ENCODE measurements at regions of chr9 and their contacts with region 1.

Region 1: GRCh38 chr9:73116031-73116430 is 35.6 kb upstream of the ANXA1 start:
- DNase-seq: no peak
- H3K4me3 Mint-ChIP-seq: no peak overlapping the region
- H3K27ac Mint-ChIP-seq: no peak overlapping the region
- H3K4me1 Mint-ChIP-seq: peaks cover 32% of the 10 kb centered on the region
- H3K27me3 Mint-ChIP-seq: no peaks in the 10 kb centered on the region

Region 2: GRCh38 chr9:73132034-73132776 is 16.2 kb after region 1 on chr9:
- intact Hi-C with region 1: loop called (anchors 1 kb)
- DNase-seq: peak; percentile 71
- H3K4me3 Mint-ChIP-seq: peak overlapping the region; percentile 85
- H3K27ac Mint-ChIP-seq: peak overlapping the region; percentile 97
- H3K4me1 Mint-ChIP-seq: peaks cover 36% of the 10 kb centered on the region
- H3K27me3 Mint-ChIP-seq: no peaks in the 10 kb centered on the region

Region 3: DNA sequence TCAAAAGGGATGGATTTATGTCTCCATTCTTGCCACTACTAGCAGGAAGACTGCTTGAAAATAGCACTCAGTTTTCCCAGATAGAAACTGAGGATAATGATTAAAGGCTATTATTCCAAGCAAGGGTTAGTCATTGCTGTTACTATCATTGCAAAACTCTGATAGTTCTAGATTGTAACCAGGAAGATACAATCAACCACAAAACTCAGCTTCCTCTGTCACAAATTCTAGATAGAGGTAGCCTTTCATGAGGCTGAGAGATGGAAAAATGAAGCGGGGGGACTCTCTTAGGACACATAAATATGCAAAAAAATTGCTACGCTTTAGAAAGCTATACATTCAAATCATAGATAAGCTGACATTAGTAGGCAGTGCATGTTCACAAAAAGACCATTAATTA is 38.7 kb after region 1 on chr9:
- intact Hi-C with region 1: loop called (anchors 1 kb)
- DNase-seq: no peak
- H3K4me3 Mint-ChIP-seq: peak overlapping the region; percentile 75
- H3K27ac Mint-ChIP-seq: peak overlapping the region; percentile 78
- H3K4me1 Mint-ChIP-seq: peaks cover 70% of the 10 kb centered on the region
- H3K27me3 Mint-ChIP-seq: no peaks in the 10 kb centered on the region

Region 4: DNA sequence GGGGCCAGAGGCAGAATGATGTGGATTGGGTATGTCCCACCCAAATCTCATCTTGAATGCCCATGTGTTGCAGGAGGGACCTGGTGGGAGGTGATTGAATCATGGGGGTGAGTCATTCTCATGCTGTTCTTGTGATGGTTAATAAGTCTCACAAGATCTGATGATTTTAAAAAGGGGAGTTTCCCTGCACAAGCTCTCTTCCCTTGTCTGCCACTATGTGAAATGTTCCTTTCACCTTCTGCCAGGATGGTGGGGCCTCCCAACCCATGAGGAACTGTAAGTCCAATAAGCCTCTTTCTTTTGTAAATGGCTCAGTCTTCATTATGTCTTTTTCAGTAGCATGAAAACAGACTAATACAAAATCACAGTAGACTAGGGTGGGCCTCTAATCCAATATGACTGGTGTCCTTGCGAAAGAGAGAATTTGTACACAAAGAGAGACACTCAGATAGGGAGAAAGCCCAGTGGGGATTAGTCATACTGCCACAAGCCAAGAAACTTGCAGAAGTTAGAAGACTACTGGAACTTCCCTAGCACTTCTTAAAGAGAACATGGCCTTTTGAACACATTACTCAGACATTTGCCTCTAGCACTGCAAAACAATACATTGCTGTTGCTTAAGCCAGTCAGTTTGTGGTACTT is 104.1 kb after region 1 on chr9:
- intact Hi-C with region 1: loop called (anchors 1 kb)
- DNase-seq: no peak
- H3K4me3 Mint-ChIP-seq: no peak overlapping the region
- H3K27ac Mint-ChIP-seq: peak overlapping the region; percentile 84
- H3K4me1 Mint-ChIP-seq: peaks cover 30% of the 10 kb centered on the region
- H3K27me3 Mint-ChIP-seq: peaks cover 19% of the 10 kb centered on the region

Measured in activated T-helper 2 cell treated with anti-CD3 and anti-CD28 coated beads, Interferon-gamma antibody, Interleukin-2, Interleukin-4, amounts not matched to agents 10 μg/mL and 5 μg/mL and 100 μg/mL, durations not matched to agents 14 hours and 24 hours and 36 hours (primary cell).